Esophagus squamous epithelium (tissue), 5 donors: ENCODE measurements at regions of chr9 and their contacts with region 1.

Region 1: DNA sequence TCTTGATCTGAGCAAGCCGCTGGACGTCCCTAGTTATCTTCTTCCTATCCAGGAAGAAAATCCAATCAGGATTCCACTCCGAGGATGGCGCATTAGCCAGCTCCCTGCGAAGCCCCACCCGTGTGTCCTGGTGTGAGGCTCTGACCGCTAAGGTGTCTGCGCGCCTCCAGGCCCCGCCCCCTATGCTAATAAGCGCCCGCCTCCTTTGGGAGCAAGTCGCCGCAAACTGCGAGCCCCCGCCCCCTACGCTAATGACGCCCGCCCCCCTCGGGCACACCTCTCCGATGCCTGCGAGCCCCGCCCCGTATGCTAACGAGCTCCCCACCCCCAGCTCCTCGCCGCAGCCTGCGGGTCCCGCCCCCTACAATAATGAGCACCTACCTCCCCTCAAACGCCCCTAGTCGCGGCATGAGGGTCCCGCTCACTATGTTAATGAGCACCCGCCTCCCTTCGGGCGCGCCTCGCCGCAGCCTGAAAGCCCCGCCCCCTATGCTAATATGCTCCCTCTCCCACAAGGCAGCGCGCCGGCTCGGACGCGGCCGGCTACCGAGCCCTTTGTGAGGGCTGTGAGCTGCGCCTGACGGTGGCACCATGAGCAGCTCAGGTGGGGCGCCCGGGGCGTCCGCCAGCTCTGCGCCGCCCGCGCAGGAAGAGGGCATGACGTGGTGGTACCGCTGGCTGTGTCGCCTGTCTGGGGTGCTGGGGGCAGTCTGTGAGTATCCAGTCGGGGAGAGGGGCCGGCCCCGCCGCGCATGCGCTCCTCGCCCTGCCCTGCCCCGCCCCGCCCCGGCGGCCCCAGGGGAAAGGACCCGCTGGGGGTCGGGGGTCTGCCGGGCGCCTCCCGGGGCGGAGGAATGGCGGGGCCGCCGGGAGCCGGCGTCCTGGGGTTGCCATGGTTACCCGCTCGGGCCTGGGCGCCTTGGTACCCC is at the start of gene CACFD1:
- DNase-seq: peak; percentile 93
- H3K4me3 ChIP-seq: peak within 1 kb of the TSS; percentile 60 to 90 (median 74)
- H3K27ac ChIP-seq: peak within 1 kb of the TSS; percentile 87 to 96 (median 91)
- H3K4me1 ChIP-seq: peaks cover 6 to 31% (median 21%) of the 10 kb centered on the region in 3 donors
- H3K27me3 ChIP-seq: no peaks in the 10 kb centered on the region
- CTCF ChIP-seq: peak in 1 of 6 experiments; percentile 4
- POLR2A ChIP-seq: peak in 3 of 4 donors; percentile 65 to 75 (median 70)
- total RNA-seq, gene CACFD1: 5.9 to 13.7 (median 9.1) TPM

Region 2: GRCh38 chr9:133417541-133418461 is 41.9 kb before region 1 on chr9 and contains the start of gene REXO4:
- intact Hi-C with region 1: loop called (anchors 10 kb)
- DNase-seq: no peak
- H3K4me3 ChIP-seq: peak within 1 kb of the TSS; percentile 53 to 93 (median 80)
- H3K27ac ChIP-seq: peak within 1 kb of the TSS; percentile 73 to 89 (median 86)
- H3K4me1 ChIP-seq: peaks cover 9 to 58% (median 16%) of the 10 kb centered on the region in 3 donors
- H3K27me3 ChIP-seq: no peaks in the 10 kb centered on the region
- CTCF ChIP-seq: peak in 2 of 6 experiments; percentile 10 to 23
- POLR2A ChIP-seq: peak in 1 of 4 donors; percentile 38
- total RNA-seq, gene REXO4: 21.5 to 26.0 (median 21.7) TPM

Region 3: DNA sequence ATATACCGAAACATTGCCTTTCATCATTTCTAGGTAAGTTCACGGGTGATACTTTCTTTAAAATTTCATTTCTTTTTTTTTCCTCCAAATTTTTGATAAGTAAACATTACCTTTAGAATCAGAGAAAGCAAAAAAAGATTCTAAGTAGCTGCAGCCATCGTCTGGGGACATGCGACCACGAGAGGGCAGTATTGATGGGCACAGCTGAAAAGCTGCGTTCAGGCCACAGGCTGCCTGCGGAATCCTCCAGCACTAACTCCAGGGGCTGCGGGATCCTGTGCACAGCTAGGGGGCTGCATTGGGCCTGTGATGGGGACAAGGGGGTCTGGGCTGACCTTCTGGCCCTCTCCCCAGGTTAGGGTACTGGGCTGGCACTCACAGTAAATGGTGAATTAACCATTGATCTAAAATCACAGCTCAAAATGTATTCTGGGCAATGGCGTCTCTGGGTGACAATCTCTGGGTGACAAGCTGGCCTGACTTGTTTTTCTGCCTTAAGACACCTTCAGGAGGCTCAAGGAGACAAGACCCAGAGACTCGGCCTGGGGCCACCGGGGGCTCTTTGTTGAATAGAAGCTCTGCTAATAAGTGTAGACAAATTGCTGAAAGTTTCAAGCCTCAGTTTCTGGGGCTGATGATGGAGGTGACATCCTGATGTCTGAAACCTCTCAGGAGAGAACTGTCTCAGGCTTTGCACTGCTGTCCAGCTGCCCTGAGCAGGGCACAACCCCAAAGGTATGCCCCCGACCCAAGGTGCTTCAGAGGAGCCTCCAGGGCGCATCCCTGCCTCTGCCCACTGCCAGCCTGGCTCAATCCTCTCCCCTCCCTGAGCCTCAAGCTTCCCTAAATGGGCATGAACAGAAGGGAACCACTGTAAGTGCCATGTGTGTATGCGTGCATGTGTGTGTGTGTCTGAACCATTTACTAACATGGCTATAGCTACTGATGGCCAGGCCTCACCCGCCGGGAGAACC is 322.7 kb after region 1 on chr9:
- intact Hi-C with region 1: no loop called
- DNase-seq: no peak
- H3K4me3 ChIP-seq: no peak overlapping the region
- H3K27ac ChIP-seq: no peak overlapping the region
- H3K4me1 ChIP-seq: peaks cover 0 to 12% (median under 1%) of the 10 kb centered on the region in 3 donors
- H3K27me3 ChIP-seq: no peaks in the 10 kb centered on the region
- CTCF ChIP-seq: peak; percentile 64 to 82 (median 77)
- POLR2A ChIP-seq: no peak